CD4-positive, alpha-beta T cell (primary cell): ENCODE measurements at regions of chr9 and their contacts with region 1.

Region 1: GRCh38 chr9:68482548-68482947 is 58.1 kb downstream of the TMEM252 start:
- DNase-seq: no peak
- ATAC-seq: no peak
- H3K4me3 ChIP-seq: no peak overlapping the region
- H3K4me3 Mint-ChIP-seq: no peak overlapping the region
- H3K27ac ChIP-seq: no peak overlapping the region
- H3K27ac Mint-ChIP-seq: no peak overlapping the region
- H3K4me1 ChIP-seq: no peaks in the 10 kb centered on the region
- H3K4me1 Mint-ChIP-seq: no peaks in the 10 kb centered on the region
- H3K27me3 ChIP-seq: peaks cover 0 to 4% of the 10 kb centered on the region in 2 experiments
- H3K27me3 Mint-ChIP-seq: peaks cover 33% of the 10 kb centered on the region
- CTCF ChIP-seq: no peak

Region 2: GRCh38 chr9:68429631-68430030 is 52.9 kb before region 1 on chr9:
- CTCF ChIA-PET with region 1: no interaction called
- POLR2A ChIA-PET with region 1: no interaction called
- intact Hi-C with region 1: loop called in 1 of 2 experiments (anchors 5 kb)
- DNase-seq: no peak
- ATAC-seq: no peak
- H3K4me3 ChIP-seq: no peak overlapping the region
- H3K4me3 Mint-ChIP-seq: no peak overlapping the region
- H3K27ac ChIP-seq: no peak overlapping the region
- H3K27ac Mint-ChIP-seq: no peak overlapping the region
- H3K4me1 ChIP-seq: no peaks in the 10 kb centered on the region
- H3K4me1 Mint-ChIP-seq: no peaks in the 10 kb centered on the region
- H3K27me3 ChIP-seq: peaks cover 0 to 6% of the 10 kb centered on the region in 2 experiments
- H3K27me3 Mint-ChIP-seq: no peaks in the 10 kb centered on the region
- CTCF ChIP-seq: no peak

Region 3: DNA sequence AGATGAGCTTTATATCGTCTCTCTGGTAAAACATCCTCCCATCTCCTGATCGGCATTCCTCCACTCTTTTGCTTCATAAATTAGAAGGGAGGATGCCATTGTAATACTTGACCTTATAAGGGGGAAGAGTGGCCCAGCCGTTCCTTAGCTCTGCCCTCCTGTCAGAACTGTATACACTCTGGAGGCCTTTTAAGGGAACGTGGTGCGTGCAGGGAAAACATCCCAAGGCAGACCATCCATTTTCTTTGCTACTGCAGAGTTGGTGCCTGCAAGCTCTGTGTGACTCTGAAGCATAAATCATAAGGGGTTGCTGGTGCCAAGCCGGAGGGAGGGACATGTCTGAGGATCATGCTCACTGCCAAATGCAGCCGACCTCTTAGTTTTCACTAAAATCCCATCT is 35.7 kb before region 1 on chr9:
- CTCF ChIA-PET with region 1: no interaction called
- POLR2A ChIA-PET with region 1: no interaction called
- intact Hi-C with region 1: loop called in 1 of 2 experiments (anchors 5 kb)
- DNase-seq: no peak
- ATAC-seq: no peak
- H3K4me3 ChIP-seq: no peak overlapping the region
- H3K4me3 Mint-ChIP-seq: no peak overlapping the region
- H3K27ac ChIP-seq: no peak overlapping the region
- H3K27ac Mint-ChIP-seq: no peak overlapping the region
- H3K4me1 ChIP-seq: no peaks in the 10 kb centered on the region
- H3K4me1 Mint-ChIP-seq: no peaks in the 10 kb centered on the region
- H3K27me3 ChIP-seq: no peaks in the 10 kb centered on the region
- H3K27me3 Mint-ChIP-seq: peaks cover 15% of the 10 kb centered on the region
- CTCF ChIP-seq: no peak